ENCODE measurements at regions of chr7 and their contacts with region 1.

Region 1: DNA sequence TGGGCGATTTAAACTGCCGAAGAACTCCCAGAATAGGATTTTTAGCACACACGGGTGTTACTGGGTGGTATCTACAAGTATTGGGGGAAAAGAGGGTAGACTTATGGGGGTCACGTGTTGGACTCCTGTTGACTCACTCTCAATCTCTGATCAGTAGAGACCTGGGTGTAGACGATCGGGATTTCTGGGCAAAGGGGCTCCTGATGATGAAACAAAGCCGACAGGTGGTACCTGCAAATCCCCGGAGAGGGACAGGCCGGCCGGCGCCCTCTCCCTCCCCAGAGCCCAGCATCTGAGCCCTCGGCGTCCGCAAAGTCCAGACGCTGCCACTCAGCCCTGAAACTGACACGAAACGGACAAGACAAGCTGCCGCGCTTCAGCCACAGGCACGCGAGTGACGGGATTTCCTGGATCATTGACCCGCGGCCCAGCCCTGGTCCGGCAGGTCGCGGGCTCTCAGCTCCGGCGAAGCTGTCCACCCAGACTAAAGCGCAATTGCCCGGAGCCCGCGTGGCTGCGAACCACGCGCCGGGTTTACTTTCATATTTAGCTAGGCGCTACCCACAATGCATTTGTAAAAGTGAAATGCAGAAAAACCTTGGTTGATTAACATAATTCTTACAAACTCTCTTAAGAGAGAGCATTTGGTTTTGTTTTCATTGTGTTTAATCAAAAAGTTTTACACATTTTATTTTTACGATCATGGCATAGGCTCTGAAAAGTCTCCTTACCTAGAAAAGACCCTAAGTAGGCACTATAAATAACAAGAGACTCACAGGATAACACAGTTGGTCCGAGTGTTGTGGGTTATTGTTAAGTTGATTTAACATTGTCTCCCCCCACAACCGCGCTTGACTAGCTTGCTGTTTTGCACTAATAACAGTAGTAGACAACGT is 56.9 kb upstream of the EZH2 start:
- DNase-seq: peak; percentile 94

Region 2: GRCh38 chr7:148884299-148885022 is 56.5 kb before region 1 on chr7:
- intact Hi-C with region 1: loop called in 1 of 2 experiments (anchors 10 kb)
- DNase-seq: peak; percentile 98